ENCODE measurements at regions of chr20 and their contacts with region 1.

Region 1: DNA sequence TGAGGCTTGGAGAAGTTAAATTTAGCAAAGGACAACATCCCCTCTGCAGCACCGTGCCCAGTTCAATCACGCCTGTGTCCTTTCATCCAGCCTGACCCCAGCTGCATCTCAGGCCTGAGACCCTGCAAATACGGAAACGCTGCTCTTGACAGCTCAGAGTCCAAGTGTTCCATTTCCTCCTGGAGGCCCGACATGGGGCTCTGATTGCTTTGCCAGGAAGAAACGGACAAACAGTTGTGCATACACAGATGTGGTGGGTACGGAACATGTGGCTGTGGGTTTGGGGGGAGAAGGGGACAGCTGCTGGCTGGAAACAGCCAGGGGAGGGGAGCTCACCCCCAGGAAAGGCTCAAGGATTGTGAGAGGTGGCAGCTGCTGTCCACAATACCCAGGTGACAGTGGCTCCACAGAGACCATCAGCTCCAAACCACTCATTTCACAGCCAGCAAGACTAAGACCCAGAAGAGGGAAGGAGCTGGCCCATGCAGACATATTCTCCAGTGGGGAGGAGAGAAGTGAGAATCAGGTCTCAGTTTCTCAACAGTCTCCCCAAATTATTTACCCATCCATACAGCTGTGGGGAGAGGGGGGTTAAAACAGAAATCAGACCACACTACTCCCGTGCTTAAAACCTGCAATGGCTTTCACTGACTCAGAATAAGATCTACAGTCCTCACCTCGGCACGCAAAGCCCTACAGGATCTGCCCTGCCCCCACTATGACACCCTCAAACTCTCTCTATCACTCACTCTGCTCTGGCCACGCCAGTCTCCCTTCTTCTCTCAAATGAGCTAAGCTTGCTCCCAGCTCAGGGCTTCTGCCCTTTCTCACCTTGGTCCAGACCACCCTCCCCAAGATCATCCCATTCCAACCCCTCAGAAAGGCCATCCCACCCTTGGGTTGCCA is 89.1 kb downstream of the PREX1 start:
- DNase-seq: no peak
- H3K4me3 ChIP-seq: no peak overlapping the region
- H3K27ac ChIP-seq: peak overlapping the region; percentile 50 to 66
- H3K4me1 ChIP-seq: peaks cover 11 to 27% of the 10 kb centered on the region in 2 donors
- H3K27me3 ChIP-seq: no peaks in the 10 kb centered on the region
- CTCF ChIP-seq: no peak

Region 2: DNA sequence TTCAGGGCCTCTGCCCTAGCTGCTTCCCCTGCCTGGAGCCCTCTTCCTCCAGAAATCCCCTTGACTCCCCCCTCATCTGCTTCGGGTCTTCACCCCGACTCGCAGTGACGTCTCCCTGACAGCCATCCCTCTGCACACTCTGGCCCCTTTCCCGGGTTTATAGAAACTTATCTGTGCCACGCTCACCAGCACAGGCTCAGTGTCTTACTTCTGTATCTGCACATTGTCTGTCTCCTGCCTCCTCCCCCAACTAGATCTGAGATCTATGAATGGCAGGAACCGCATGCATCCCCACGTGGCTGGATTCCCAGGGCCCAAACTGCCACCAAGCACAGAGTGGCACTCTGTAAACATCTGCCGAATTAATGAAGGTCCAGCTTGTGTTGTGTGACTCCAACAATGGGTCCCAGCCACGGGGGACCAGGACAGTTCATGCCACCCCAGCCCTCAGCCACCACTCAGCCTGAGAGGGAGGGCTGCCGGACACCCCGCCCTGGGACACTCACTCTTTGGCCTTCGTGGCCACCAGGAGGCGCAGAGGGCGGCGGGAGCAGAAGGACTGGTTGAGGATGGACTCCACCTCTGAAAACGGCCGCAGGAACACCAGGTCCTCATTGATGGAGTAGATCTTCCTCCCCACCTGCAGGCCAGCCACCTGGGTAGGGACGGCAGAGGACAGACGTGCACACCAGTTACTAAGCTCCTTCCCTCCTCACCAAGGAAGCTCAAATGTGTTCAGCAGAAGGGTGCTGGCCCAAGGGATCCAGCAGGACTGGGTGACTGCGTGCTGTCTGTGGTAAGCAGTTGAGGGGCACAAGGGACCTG is 81.9 kb before region 1 on chr20:
- intact Hi-C with region 1: no loop called
- DNase-seq: no peak
- H3K4me3 ChIP-seq: no peak overlapping the region
- H3K27ac ChIP-seq: no peak overlapping the region
- H3K4me1 ChIP-seq: peaks cover 7 to 25% of the 10 kb centered on the region in 2 donors
- H3K27me3 ChIP-seq: no peaks in the 10 kb centered on the region
- CTCF ChIP-seq: peak in 1 of 3 experiments; percentile 6

Region 3: GRCh38 chr20:48787861-48788375 is 49.3 kb after region 1 on chr20:
- intact Hi-C with region 1: loop called (anchors 5 kb)
- DNase-seq: no peak
- H3K4me3 ChIP-seq: no peak overlapping the region
- H3K27ac ChIP-seq: no peak overlapping the region
- H3K4me1 ChIP-seq: peaks cover 18 to 34% of the 10 kb centered on the region in 2 donors
- H3K27me3 ChIP-seq: no peaks in the 10 kb centered on the region
- CTCF ChIP-seq: no peak